Common myeloid progenitor, CD34-positive (primary cell): ENCODE measurements at regions of chr20 and their contacts with region 1.

Region 1: GRCh38 chr20:23245553-23246181 is 104.9 kb upstream of the NXT1 start:
- DNase-seq: peak; percentile 80 to 91 (median 89)
- H3K4me3 ChIP-seq: no peak overlapping the region
- H3K27ac ChIP-seq: no peak overlapping the region
- H3K4me1 ChIP-seq: peaks cover 0 to 6% (median 3%) of the 10 kb centered on the region in 4 experiments
- H3K27me3 ChIP-seq: peaks cover 0 to 4% (median 0%) of the 10 kb centered on the region in 5 experiments

Region 2: DNA sequence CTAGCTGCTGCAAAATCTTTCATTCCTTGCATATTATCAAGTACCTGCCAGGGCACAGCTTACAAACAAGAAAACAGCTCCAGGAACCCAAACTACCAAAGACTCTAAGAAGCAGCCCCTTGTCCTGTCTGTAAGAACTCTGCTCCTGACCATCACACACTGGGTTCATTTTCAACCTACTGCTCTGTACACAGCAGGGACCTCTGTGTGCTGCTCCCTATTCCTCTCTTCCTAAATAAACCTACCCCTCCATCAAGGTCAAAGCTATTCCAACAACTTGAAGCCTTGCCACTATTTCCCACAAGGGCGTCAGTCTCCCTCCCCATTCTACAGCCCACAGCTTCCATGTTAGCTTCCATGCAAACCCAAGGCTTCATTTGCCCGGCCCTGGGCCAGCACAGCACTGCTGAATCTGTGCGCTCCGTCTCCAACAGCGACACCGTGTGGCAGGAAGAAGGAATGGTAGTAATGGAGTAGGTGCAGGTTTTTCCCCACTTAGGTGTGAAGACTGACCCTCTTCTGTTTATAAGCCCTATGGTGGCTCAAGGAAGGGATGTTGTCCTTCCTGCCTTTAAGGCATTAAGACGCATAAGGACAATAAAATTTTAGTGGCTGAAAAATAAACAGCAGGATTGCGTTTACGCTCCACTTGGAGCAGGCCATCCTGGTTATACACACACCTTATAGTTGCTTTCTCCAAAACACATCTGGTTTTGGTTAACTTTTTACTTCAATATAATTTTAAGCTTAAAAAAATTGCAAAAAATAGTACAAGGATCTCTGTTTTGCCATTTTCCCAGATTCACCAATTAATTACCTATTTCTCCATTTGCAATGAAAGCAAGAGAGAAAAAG is 10.3 kb before region 1 on chr20:
- CTCF ChIA-PET with region 1: interaction called, 14 read pairs
- POLR2A ChIA-PET with region 1: no interaction called
- DNase-seq: peak; percentile 56 to 76 (median 71)
- H3K4me3 ChIP-seq: no peak overlapping the region
- H3K27ac ChIP-seq: no peak overlapping the region
- H3K4me1 ChIP-seq: peaks cover 0 to 10% (median 6%) of the 10 kb centered on the region in 4 experiments
- H3K27me3 ChIP-seq: peaks cover 0 to 4% (median 0%) of the 10 kb centered on the region in 5 experiments

Region 3: DNA sequence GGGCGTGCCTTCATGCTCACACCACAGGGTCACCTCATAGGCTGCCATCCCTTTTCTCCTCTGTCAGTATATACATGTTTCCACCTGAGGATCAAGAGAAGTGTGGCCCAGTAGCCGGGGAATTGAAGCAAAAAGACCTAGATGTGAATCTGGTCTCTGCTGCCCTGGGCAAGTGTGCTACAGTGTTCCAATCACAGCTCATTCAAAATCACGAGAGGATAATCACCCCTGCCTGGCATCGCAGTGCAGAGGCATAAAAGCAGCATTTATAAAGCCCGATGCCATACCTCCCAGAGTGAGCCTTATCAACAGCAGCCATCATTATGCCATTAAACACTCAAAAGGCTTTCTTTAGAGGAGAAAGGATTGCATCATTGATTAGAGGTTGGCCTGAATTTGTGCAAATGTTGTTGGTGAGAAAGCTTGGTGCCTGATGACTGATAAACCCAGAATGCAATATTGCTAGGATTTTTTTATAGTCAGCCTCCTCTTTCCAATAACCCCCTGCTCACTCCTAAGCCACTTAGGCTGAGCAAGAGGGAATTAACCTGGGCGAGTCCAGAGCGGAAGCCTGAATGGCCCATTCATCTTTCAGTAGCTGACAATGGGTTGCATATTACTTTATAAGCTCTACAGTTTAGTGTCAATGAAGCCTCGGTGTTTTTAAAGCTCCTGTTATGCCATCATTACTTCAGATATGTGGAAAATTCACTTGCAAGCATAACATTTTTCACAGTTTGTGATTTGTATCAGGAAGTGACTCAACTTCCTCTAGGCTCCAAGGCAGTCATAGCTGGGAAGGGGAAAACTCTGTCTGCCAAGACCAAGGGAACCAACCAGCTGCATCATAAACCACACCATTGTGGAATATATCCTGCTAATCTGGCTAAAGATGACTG is 12.4 kb after region 1 on chr20:
- CTCF ChIA-PET with region 1: interaction called, 10 read pairs
- POLR2A ChIA-PET with region 1: no interaction called
- DNase-seq: peak; percentile 48 to 73 (median 54)
- H3K4me3 ChIP-seq: peak overlapping the region in 2 of 7 experiments; percentile 5 to 25
- H3K27ac ChIP-seq: no peak overlapping the region
- H3K4me1 ChIP-seq: peaks cover 14 to 25% (median 24%) of the 10 kb centered on the region in 4 experiments
- H3K27me3 ChIP-seq: no peaks in the 10 kb centered on the region